Mammary epithelial cell (primary cell): ENCODE measurements at regions of chr20 and their contacts with region 1.

Region 1: GRCh38 chr20:33097001-33097400 is 17.6 kb downstream of the BPIFB4 start:
- DNase-seq: no peak
- H3K4me3 ChIP-seq: no peak overlapping the region
- H3K27ac ChIP-seq: no peak overlapping the region
- H3K4me1 ChIP-seq: no peaks in the 10 kb centered on the region
- H3K27me3 ChIP-seq: no peaks in the 10 kb centered on the region
- CTCF ChIP-seq: no peak

Region 2: GRCh38 chr20:32674362-32674789 is 422.6 kb before region 1 on chr20:
- CTCF ChIA-PET with region 1: no interaction called
- dilution Hi-C with region 1: no loop called
- in situ Hi-C with region 1: no loop called
- intact Hi-C with region 1: loop called (anchors 1 kb)
- DNase-seq: peak; percentile 44
- H3K4me3 ChIP-seq: no peak overlapping the region
- H3K27ac ChIP-seq: no peak overlapping the region
- H3K4me1 ChIP-seq: peaks cover 5% of the 10 kb centered on the region
- H3K27me3 ChIP-seq: no peaks in the 10 kb centered on the region
- CTCF ChIP-seq: peak; percentile 88 to 93

Region 3: GRCh38 chr20:33211817-33212424 is 114.9 kb after region 1 on chr20:
- CTCF ChIA-PET with region 1: interaction called, 6 read pairs
- dilution Hi-C with region 1: no loop called
- in situ Hi-C with region 1: no loop called
- intact Hi-C with region 1: loop called (anchors 1 kb)
- DNase-seq: peak; percentile 44
- H3K4me3 ChIP-seq: no peak overlapping the region
- H3K27ac ChIP-seq: no peak overlapping the region
- H3K4me1 ChIP-seq: no peaks in the 10 kb centered on the region
- H3K27me3 ChIP-seq: no peaks in the 10 kb centered on the region
- CTCF ChIP-seq: peak; percentile 45 to 62

Region 4: DNA sequence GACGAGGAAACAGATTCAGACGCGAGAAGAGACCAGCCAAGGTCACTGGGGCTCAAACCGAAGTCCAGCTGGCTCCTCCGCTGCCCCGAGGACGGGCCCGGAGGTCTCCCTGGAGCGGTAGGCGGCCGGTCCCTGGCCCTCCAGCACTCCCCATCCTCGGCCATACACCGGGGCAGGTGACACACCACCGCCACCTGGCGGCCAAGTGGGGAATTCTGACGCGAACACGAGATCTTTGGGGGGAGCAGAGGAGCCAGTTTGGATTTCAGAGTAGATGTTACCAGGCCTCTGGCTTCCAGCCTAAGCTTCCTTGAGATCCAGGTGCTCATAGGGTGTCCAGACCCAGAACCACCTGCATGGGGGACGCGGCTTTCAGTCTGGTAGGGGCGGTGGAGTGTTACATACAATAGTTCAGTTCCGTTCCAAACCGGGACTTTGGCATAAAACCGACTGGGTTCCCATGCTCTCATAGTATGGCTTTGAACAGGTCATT is 202.2 kb after region 1 on chr20:
- CTCF ChIA-PET with region 1: no interaction called
- dilution Hi-C with region 1: no loop called
- in situ Hi-C with region 1: no loop called
- intact Hi-C with region 1: loop called (anchors 1 kb)
- DNase-seq: peak; percentile 35
- H3K4me3 ChIP-seq: peak overlapping the region in 1 of 3 experiments; percentile 20
- H3K27ac ChIP-seq: no peak overlapping the region
- H3K4me1 ChIP-seq: no peaks in the 10 kb centered on the region
- H3K27me3 ChIP-seq: no peaks in the 10 kb centered on the region
- CTCF ChIP-seq: peak; percentile 92 to 96

Region 5: DNA sequence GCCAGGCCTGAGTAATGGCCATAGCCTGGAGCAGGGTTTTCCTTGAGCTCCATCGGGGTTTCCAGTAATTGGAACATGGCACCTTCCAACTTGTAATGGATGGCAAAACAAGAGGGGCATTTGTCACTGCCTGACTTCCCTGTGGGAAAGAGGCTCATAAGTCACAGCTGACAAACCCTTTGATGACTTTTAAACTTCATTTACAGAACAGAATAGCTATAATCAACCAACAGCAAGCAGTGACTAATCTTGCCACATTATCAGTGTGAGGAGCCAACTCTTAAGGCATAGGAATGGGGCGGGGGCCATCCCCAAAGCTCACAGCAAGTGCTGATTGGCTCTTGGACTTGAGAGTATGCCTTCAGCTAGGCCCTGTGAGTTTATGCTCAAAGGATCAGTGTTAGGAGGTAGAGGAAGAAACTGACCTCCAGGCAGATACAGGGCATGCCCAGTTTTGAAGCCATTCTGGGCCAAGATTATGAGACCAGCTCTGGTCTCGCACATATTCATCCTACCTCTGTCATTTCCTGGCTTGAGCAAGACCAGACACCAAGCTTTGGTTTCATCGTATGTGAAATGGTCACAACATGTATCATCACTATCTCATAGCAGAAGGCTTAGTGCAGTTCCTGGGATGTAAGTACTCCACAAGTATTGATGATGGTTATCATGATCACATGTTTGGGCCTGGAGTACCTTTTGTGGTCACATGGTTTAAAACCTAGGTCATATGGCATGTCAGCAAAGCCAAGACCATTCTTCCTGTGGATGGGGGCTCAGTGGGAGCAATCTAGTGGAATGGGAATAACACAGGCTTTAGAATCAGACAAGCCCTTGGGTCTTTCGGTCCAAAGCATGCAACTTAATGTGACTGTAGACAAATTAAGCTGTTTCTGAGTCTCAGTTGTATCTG is 965.8 kb after region 1 on chr20:
- CTCF ChIA-PET with region 1: no interaction called
- dilution Hi-C with region 1: no loop called
- in situ Hi-C with region 1: no loop called
- intact Hi-C with region 1: loop called (anchors 5 kb)
- DNase-seq: peak; percentile 87
- H3K4me3 ChIP-seq: no peak overlapping the region
- H3K27ac ChIP-seq: peak overlapping the region; percentile 45
- H3K4me1 ChIP-seq: peaks cover 55% of the 10 kb centered on the region
- H3K27me3 ChIP-seq: no peaks in the 10 kb centered on the region
- CTCF ChIP-seq: no peak